ENCODE measurements at regions of chr17 and their contacts with region 1.

Region 1: GRCh38 chr17:40018211-40019121 is 3.2 kb downstream of the CSF3 start:
- DNase-seq: no peak
- ATAC-seq: no peak
- H3K4me3 Mint-ChIP-seq: no peak overlapping the region
- H3K27ac Mint-ChIP-seq: no peak overlapping the region
- H3K4me1 Mint-ChIP-seq: no peaks in the 10 kb centered on the region
- H3K27me3 Mint-ChIP-seq: no peaks in the 10 kb centered on the region
- CTCF ChIP-seq: no peak

Region 2: GRCh38 chr17:39996800-39997199 is 21.7 kb before region 1 on chr17:
- CTCF ChIA-PET with region 1: interaction called, 11 read pairs
- POLR2A ChIA-PET with region 1: no interaction called
- intact Hi-C with region 1: no loop called
- DNase-seq: no peak
- ATAC-seq: no peak
- H3K4me3 Mint-ChIP-seq: no peak overlapping the region
- H3K27ac Mint-ChIP-seq: no peak overlapping the region
- H3K4me1 Mint-ChIP-seq: peaks cover 6% of the 10 kb centered on the region
- H3K27me3 Mint-ChIP-seq: no peaks in the 10 kb centered on the region
- CTCF ChIP-seq: no peak